OCI-LY7 (cell line): ENCODE measurements at regions of chr13 and their contacts with region 1.

Region 1: GRCh38 chr13:26707122-26708006 is 53.2 kb downstream of the GPR12 start:
- DNase-seq: peak; percentile 65
- H3K4me3 ChIP-seq: no peak overlapping the region
- H3K27ac ChIP-seq: no peak overlapping the region
- H3K4me1 ChIP-seq: no peaks in the 10 kb centered on the region
- CTCF ChIP-seq: peak; percentile 75

Region 2: DNA sequence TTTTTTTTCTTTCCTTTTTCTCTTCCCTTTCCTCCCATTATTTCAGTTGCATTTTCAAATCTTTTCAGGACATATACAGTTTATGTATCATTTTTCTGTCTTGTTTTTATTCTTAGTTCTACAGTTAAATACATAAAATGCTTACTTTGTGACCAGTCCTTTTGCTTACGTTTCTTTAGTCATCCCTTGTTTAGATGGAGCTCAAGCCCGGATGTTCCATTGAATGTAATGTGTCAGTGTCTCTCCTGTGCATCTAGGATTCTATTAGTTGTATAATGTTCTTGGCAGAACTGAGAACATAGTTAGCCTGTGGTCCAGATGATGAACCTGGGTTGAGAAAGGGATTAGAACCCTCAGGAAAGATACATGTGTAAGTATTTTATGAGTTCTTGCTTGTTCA is 132.1 kb before region 1 on chr13:
- CTCF ChIA-PET with region 1: no interaction called
- POLR2A ChIA-PET with region 1: no interaction called
- intact Hi-C with region 1: no loop called
- DNase-seq: no peak
- H3K4me3 ChIP-seq: no peak overlapping the region
- H3K27ac ChIP-seq: no peak overlapping the region
- H3K4me1 ChIP-seq: no peaks in the 10 kb centered on the region
- CTCF ChIP-seq: no peak

Region 3: GRCh38 chr13:26628706-26629105 is 78.7 kb before region 1 on chr13:
- CTCF ChIA-PET with region 1: no interaction called
- POLR2A ChIA-PET with region 1: no interaction called
- intact Hi-C with region 1: no loop called
- DNase-seq: peak; percentile 10
- H3K4me3 ChIP-seq: no peak overlapping the region
- H3K27ac ChIP-seq: no peak overlapping the region
- H3K4me1 ChIP-seq: no peaks in the 10 kb centered on the region
- CTCF ChIP-seq: no peak

Region 4: GRCh38 chr13:26872525-26873385 is 165.4 kb after region 1 on chr13:
- CTCF ChIA-PET with region 1: interaction called, 3 read pairs
- POLR2A ChIA-PET with region 1: no interaction called
- intact Hi-C with region 1: loop called (anchors 2 kb)
- DNase-seq: peak; percentile 62
- H3K4me3 ChIP-seq: no peak overlapping the region
- H3K27ac ChIP-seq: no peak overlapping the region
- H3K4me1 ChIP-seq: no peaks in the 10 kb centered on the region
- CTCF ChIP-seq: peak; percentile 91

Region 5: GRCh38 chr13:26929971-26930730 is 222.8 kb after region 1 on chr13:
- CTCF ChIA-PET with region 1: no interaction called
- POLR2A ChIA-PET with region 1: no interaction called
- intact Hi-C with region 1: loop called (anchors 1 kb)
- DNase-seq: peak; percentile 72
- H3K4me3 ChIP-seq: peak overlapping the region; percentile 33
- H3K27ac ChIP-seq: no peak overlapping the region
- H3K4me1 ChIP-seq: peaks cover 5% of the 10 kb centered on the region
- CTCF ChIP-seq: peak; percentile 98